Sigmoid colon (tissue), 7 donors: ENCODE measurements at regions of chr1 and their contacts with region 1.

Region 1: DNA sequence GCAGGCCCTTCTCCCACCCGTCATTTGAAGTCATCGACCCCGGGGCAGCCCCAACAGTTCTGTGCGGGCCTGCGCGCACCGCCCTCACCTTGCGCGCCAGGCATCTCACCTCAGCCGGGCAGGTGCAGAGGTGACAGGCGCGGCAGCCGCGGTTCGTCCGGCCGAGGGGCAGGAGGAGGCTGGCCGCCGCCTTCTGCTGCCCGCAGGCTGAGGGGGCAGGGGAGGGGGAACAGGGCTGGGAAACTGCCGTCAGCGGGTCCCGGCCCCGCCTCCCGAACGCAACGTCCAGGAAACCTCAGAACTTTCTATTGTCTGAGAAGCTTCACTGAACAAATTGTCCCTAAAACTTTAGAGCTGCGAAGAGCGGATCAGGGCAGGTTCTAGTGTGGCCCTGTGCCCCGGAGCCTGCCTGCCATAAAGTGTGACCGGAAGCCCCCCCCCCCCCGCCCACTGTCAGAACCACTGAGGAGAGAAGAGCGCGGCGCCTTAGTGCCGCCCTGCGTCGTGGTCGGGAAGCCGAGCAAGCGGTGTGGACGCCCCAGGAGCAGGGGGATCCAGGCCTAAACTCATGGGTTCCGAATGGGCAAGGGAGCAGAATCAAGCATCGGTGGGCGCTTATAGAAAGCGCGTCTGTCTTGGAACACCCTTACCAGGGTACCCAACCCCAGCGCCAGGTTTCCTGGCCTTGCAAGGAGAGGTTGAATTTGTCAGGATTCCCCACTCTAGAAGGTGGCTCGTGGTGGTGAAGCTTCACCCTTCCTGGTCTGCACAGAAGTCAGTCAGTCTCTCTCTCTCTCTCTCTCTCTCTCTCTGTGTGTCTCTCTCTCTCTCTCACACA is 13.3 kb upstream of the TBX15 start:
- DNase-seq: peak; percentile 54
- H3K4me3 ChIP-seq: no peak overlapping the region
- H3K27ac ChIP-seq: no peak overlapping the region
- H3K4me1 ChIP-seq: peaks cover 0 to 18% (median 13%) of the 10 kb centered on the region in 4 donors
- H3K27me3 ChIP-seq: peaks cover 72 to 100% (median 88%) of the 10 kb centered on the region in 3 donors
- CTCF ChIP-seq: no peak
- EP300 ChIP-seq: no peak
- POLR2A ChIP-seq: no peak

Region 2: GRCh38 chr1:118987468-118988185 is 13.8 kb before region 1 on chr1:
- intact Hi-C with region 1: loop called (anchors 2 kb)
- DNase-seq: no peak
- H3K4me3 ChIP-seq: peak overlapping the region; percentile 13 to 41 (median 27)
- H3K27ac ChIP-seq: no peak overlapping the region
- H3K4me1 ChIP-seq: peaks cover 0 to 45% (median 38%) of the 10 kb centered on the region in 4 donors
- H3K27me3 ChIP-seq: peaks cover 94 to 100% (median 98%) of the 10 kb centered on the region in 3 donors
- CTCF ChIP-seq: no peak
- EP300 ChIP-seq: no peak
- POLR2A ChIP-seq: no peak

Region 3: GRCh38 chr1:119052267-119052666 is 50.9 kb after region 1 on chr1:
- intact Hi-C with region 1: no loop called
- DNase-seq: no peak
- H3K4me3 ChIP-seq: no peak overlapping the region
- H3K27ac ChIP-seq: no peak overlapping the region
- H3K4me1 ChIP-seq: no peaks in the 10 kb centered on the region
- H3K27me3 ChIP-seq: no peaks in the 10 kb centered on the region
- CTCF ChIP-seq: no peak
- EP300 ChIP-seq: no peak
- POLR2A ChIP-seq: no peak

Region 4: DNA sequence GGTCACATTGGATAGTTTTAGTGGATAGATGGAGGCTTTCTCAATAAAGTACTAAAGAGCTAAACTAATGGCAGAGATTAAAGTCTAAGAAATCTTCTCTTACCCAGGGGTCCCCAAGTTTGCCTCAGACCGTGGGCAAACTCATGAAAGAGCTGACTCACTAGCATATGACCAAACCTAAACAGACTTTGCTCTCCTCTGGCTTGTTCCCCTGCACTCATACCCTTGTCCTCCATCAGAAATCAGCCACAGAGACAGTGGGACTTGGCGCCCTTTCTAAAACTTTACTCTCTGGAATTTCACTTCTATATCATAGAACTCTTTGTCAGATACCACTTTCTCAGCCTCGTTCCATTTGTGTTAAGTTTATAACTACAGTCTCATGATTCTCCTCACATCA is 396.6 kb after region 1 on chr1:
- intact Hi-C with region 1: no loop called
- DNase-seq: no peak
- H3K4me3 ChIP-seq: no peak overlapping the region
- H3K27ac ChIP-seq: no peak overlapping the region
- H3K4me1 ChIP-seq: no peaks in the 10 kb centered on the region
- H3K27me3 ChIP-seq: no peaks in the 10 kb centered on the region
- CTCF ChIP-seq: no peak
- EP300 ChIP-seq: no peak
- POLR2A ChIP-seq: no peak